Activated T-helper 2 cell treated with anti-CD3 and anti-CD28 coated beads, Interferon-gamma antibody, Interleukin-2, Interleukin-4, amounts not matched to agents 10 μg/mL and 5 μg/mL and 100 μg/mL, durations not matched to agents 14 hours and 24 hours and 36 hours (primary cell): ENCODE measurements at regions of chrX and their contacts with region 1.

Region 1: GRCh38 chrX:110992611-110993010 is 103.4 kb upstream of the PAK3 start:
- DNase-seq: no peak
- H3K4me3 Mint-ChIP-seq: no peak overlapping the region
- H3K27ac Mint-ChIP-seq: no peak overlapping the region
- H3K4me1 Mint-ChIP-seq: no peaks in the 10 kb centered on the region
- H3K27me3 Mint-ChIP-seq: peaks cover under 1% of the 10 kb centered on the region

Region 2: DNA sequence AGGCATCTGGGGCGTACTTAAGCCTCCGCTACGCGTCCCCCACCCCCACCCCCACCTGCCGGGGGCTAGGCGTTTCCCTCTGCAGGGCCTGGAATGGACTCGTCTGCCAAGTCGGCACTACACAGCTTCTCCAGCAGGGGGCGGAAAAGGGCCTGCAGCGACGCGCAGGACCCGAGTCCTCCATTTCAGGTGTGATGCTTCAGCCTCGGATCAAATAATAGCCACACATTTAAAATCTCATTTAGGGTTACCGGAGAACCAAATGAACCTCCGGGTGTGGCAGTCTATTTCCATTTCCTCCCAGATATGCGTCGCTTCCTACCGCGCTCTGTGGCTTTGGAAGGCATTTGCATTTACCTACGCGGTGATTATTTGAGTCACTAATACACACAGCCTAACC is 106.3 kb after region 1 on chrX:
- intact Hi-C with region 1: loop called (anchors 5 kb)
- DNase-seq: peak; percentile 46
- H3K4me3 Mint-ChIP-seq: no peak overlapping the region
- H3K27ac Mint-ChIP-seq: no peak overlapping the region
- H3K4me1 Mint-ChIP-seq: peaks cover 16% of the 10 kb centered on the region
- H3K27me3 Mint-ChIP-seq: peaks cover 25% of the 10 kb centered on the region

Region 3: GRCh38 chrX:111131573-111131972 is 139.0 kb after region 1 on chrX:
- intact Hi-C with region 1: no loop called
- DNase-seq: no peak
- H3K4me3 Mint-ChIP-seq: no peak overlapping the region
- H3K27ac Mint-ChIP-seq: no peak overlapping the region
- H3K4me1 Mint-ChIP-seq: peaks cover 14% of the 10 kb centered on the region
- H3K27me3 Mint-ChIP-seq: no peaks in the 10 kb centered on the region

Region 4: GRCh38 chrX:111244235-111244750 is 251.7 kb after region 1 on chrX:
- intact Hi-C with region 1: loop called (anchors 5 kb)
- DNase-seq: no peak
- H3K4me3 Mint-ChIP-seq: no peak overlapping the region
- H3K27ac Mint-ChIP-seq: no peak overlapping the region
- H3K4me1 Mint-ChIP-seq: peaks cover 3% of the 10 kb centered on the region
- H3K27me3 Mint-ChIP-seq: no peaks in the 10 kb centered on the region

Region 5: GRCh38 chrX:112078606-112079005 is 1086.0 kb after region 1 on chrX:
- intact Hi-C with region 1: no loop called
- DNase-seq: no peak
- H3K4me3 Mint-ChIP-seq: no peak overlapping the region
- H3K27ac Mint-ChIP-seq: no peak overlapping the region
- H3K4me1 Mint-ChIP-seq: no peaks in the 10 kb centered on the region
- H3K27me3 Mint-ChIP-seq: peaks cover 23% of the 10 kb centered on the region